Panc1 (cell line): ENCODE measurements at regions of chr18 and their contacts with region 1.

Region 1: DNA sequence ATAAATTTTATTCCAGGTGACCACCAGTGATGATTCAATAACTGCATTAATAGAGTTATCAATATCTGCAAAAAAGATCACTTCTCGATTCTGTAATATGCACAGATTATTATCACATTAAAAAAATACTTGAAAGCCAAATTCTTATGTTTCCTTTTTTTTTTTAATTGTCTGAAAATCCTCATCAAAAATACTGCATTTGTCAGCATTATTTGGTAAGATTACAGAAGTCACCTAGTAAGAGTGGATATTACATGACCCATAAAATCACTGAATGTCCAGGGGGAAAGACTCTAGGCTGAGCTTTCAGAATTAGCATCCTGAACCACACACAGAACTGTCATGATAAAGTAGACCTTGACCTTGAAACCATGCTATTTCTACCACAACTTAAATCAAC is 617.2 kb upstream of the CDH7 start:
- DNase-seq: no peak
- ATAC-seq: no peak
- H3K4me3 ChIP-seq: no peak overlapping the region
- H3K27ac ChIP-seq: no peak overlapping the region
- H3K4me1 ChIP-seq: no peaks in the 10 kb centered on the region
- H3K27me3 ChIP-seq: no peaks in the 10 kb centered on the region
- CTCF ChIP-seq: no peak

Region 2: GRCh38 chr18:65093346-65093745 is 40.3 kb before region 1 on chr18:
- CTCF ChIA-PET with region 1: interaction called, 11 read pairs
- POLR2A ChIA-PET with region 1: no interaction called
- in situ Hi-C with region 1: no loop called
- intact Hi-C with region 1: no loop called
- DNase-seq: no peak
- ATAC-seq: no peak
- H3K4me3 ChIP-seq: no peak overlapping the region
- H3K27ac ChIP-seq: no peak overlapping the region
- H3K4me1 ChIP-seq: no peaks in the 10 kb centered on the region
- H3K27me3 ChIP-seq: no peaks in the 10 kb centered on the region
- CTCF ChIP-seq: no peak

Region 3: DNA sequence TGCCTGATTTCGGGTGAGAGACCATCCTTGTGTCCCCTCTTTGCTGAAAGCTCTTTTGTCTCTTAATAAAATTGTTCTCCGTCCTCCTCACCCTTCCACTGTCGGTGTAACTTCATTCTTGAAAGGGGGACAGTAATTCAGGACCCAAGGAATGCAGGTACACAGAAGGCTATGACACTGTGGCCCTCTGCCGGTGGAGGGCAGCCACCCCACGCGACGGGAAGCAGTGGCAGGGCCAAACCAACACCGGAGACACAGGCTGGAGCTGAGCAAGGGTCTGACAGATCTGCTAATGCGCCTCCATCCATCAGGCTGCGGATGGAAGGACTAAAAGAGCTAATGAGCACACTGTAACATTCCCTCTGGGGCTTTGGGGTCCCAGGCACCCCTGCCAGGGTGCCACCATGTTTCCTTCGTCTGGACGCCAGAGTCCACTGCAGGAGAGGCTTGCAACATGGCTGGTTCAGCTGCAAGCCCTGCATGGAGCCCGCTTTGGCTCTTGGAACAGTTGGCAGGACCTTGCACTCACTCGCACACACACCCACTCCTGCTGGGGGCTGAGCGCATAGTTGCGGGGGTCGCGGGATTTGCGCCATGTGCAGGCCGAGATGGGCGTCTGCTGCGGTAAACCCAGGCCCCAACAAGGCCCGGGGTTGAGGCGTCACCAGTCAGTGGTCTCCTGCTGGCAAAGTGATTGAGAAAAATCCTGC is 73.1 kb after region 1 on chr18:
- CTCF ChIA-PET with region 1: no interaction called
- POLR2A ChIA-PET with region 1: no interaction called
- in situ Hi-C with region 1: no loop called
- intact Hi-C with region 1: no loop called
- DNase-seq: no peak
- ATAC-seq: no peak
- H3K4me3 ChIP-seq: no peak overlapping the region
- H3K27ac ChIP-seq: no peak overlapping the region
- H3K4me1 ChIP-seq: no peaks in the 10 kb centered on the region
- H3K27me3 ChIP-seq: no peaks in the 10 kb centered on the region
- CTCF ChIP-seq: peak; percentile 27